Sigmoid colon (tissue), 7 donors: ENCODE measurements at regions of chr1 and their contacts with region 1.

Region 1: DNA sequence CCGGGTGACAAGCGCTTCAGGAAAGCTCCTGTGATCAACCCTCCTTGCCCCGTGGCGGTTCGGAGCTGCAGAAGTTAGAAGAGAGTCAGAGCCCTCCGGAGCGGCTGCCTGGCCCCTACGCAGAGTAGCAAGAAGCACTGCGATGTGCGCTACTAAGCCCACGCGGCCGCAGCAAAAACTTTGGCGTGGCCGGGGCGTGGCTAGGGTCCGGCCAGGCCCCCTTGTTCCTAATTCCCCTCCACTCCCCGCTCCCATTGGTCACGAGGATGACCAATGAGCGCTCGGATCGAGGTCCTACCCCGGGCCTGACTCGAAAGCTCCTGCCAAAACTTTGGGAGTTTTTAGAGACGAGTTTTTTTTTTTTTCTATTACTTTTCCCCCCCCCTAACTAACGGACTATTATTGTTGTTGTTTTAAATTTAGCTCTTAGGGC is at the start of gene HLX:
- DNase-seq: peak; percentile 99
- H3K4me3 ChIP-seq: peak within 1 kb of the TSS; percentile 84 to 97 (median 95)
- H3K27ac ChIP-seq: peak within 1 kb of the TSS; percentile 95 to 100 (median 98)
- H3K4me1 ChIP-seq: peaks cover 0 to 70% (median 57%) of the 10 kb centered on the region in 4 donors
- H3K27me3 ChIP-seq: no peaks in the 10 kb centered on the region
- CTCF ChIP-seq: no peak
- EP300 ChIP-seq: no peak
- POLR2A ChIP-seq: peak; percentile 89 to 98
- total RNA-seq, gene HLX: 28.2 to 53.5 (median 37.8) TPM

Region 2: DNA sequence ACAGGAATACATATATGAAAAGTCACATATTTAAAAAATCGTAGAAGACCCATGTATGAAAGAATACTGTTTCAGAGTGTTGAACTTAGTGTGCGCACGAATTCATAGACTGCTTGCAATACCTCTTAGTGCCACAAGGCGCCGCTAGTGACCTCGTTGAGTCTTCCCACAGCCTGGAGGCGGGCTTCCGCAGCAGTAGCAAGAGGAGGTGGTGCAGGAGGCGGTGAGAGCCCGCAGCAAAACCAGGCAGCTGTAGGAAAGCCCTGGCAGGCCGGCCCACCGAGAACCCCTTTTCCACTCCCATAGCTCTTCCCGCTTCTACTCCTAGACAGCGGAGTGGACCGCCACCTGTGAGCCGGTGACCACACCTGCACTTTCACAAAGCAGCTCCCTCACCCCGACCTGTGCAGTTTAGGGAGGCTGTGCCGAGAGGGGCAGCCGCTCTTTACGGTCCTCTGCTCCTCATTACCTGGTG is 68.9 kb before region 1 on chr1:
- intact Hi-C with region 1: loop called (anchors 1 kb)
- DNase-seq: peak; percentile 95
- H3K4me3 ChIP-seq: peak overlapping the region in 3 of 4 donors; percentile 10 to 25 (median 16)
- H3K27ac ChIP-seq: peak overlapping the region in 3 of 4 donors; percentile 46 to 77 (median 58)
- H3K4me1 ChIP-seq: peaks cover 0 to 64% (median 60%) of the 10 kb centered on the region in 4 donors
- H3K27me3 ChIP-seq: no peaks in the 10 kb centered on the region
- CTCF ChIP-seq: peak; percentile 77 to 97 (median 95)
- EP300 ChIP-seq: no peak
- POLR2A ChIP-seq: no peak

Region 3: DNA sequence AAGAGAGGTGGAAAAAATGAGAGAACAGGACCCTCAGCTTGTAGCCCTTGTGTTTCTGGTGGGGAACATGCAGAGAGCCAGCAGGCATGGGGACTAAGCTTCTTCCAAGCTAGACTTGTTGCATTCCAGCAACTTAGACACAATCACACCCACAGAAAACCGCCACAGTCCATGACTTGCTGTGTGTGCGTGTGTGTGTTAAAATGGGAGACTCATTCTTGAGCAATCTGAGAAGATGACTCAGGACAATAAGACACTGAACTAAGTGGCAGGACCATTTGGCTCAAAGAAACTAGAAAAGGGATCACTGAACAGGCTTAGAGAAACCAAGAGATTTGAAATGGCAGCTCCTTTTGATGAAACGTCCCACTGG is 78.1 kb after region 1 on chr1:
- intact Hi-C with region 1: no loop called
- DNase-seq: no peak
- H3K4me3 ChIP-seq: no peak overlapping the region
- H3K27ac ChIP-seq: peak overlapping the region in 1 of 4 donors; percentile 23
- H3K4me1 ChIP-seq: peaks cover 0 to 6% (median 0%) of the 10 kb centered on the region in 4 donors
- H3K27me3 ChIP-seq: no peaks in the 10 kb centered on the region
- CTCF ChIP-seq: no peak
- EP300 ChIP-seq: no peak
- POLR2A ChIP-seq: no peak

Region 4: DNA sequence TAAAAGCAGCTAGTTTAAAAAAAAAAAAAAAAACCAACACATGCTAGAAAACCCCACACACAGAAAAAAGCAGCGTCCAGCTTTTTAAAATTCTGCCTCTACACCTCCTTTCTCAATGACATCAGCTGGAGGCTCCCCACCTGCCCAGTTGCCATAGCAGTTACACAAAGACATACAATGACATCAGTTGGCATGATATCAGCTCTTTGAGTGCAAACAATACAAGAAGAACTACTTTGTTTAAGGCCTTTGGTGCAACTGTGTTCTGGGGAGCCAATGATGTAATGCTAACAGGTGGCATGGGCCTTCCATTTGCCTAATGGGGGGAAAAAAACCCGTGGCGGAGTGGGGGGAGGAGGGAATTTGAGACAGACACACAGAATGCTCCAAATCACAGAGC is 829.9 kb after region 1 on chr1:
- intact Hi-C with region 1: loop called (anchors 5 kb)
- DNase-seq: peak; percentile 85
- H3K4me3 ChIP-seq: no peak overlapping the region
- H3K27ac ChIP-seq: peak overlapping the region; percentile 74 to 89 (median 81)
- H3K4me1 ChIP-seq: peaks cover 0 to 98% (median 85%) of the 10 kb centered on the region in 4 donors
- H3K27me3 ChIP-seq: no peaks in the 10 kb centered on the region
- CTCF ChIP-seq: no peak
- EP300 ChIP-seq: peak in 3 of 4 donors; percentile 53 to 93 (median 89)
- POLR2A ChIP-seq: no peak

Region 5: GRCh38 chr1:221715321-221716169 is 836.5 kb after region 1 on chr1:
- intact Hi-C with region 1: loop called (anchors 5 kb)
- DNase-seq: no peak
- H3K4me3 ChIP-seq: no peak overlapping the region
- H3K27ac ChIP-seq: peak overlapping the region; percentile 73 to 89 (median 84)
- H3K4me1 ChIP-seq: peaks cover 0 to 98% (median 91%) of the 10 kb centered on the region in 4 donors
- H3K27me3 ChIP-seq: no peaks in the 10 kb centered on the region
- CTCF ChIP-seq: no peak
- EP300 ChIP-seq: peak in 2 of 4 donors; percentile 34 to 51
- POLR2A ChIP-seq: no peak

Region 6: DNA sequence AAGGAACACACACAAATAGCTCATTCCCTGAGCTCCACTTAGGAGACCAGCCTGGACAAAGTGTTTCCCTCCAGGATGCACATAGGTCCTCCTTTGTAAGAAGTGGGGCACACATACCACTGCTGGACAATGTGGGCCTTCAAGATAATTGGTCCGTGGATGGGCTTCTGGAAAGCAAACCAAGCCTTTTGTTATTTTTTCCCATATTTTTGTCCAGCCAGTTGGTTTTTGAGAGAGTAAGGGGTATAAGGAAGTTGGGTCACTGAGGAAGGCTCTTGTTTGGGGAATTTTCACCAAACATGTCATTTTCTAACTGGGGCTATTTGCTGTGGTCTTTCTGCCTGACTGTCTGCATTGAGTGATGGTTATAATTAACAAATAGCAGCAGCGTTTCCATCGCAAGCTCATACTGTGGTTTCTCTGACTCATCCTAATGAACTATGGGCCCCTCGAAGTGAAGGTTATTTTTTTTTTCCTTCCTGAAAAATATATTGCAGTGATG is 1169.1 kb after region 1 on chr1:
- intact Hi-C with region 1: loop called (anchors 10 kb)
- DNase-seq: no peak
- H3K4me3 ChIP-seq: no peak overlapping the region
- H3K27ac ChIP-seq: no peak overlapping the region
- H3K4me1 ChIP-seq: peaks cover 0 to 40% (median 27%) of the 10 kb centered on the region in 4 donors
- H3K27me3 ChIP-seq: no peaks in the 10 kb centered on the region
- CTCF ChIP-seq: no peak
- EP300 ChIP-seq: no peak
- POLR2A ChIP-seq: no peak

Region 7: DNA sequence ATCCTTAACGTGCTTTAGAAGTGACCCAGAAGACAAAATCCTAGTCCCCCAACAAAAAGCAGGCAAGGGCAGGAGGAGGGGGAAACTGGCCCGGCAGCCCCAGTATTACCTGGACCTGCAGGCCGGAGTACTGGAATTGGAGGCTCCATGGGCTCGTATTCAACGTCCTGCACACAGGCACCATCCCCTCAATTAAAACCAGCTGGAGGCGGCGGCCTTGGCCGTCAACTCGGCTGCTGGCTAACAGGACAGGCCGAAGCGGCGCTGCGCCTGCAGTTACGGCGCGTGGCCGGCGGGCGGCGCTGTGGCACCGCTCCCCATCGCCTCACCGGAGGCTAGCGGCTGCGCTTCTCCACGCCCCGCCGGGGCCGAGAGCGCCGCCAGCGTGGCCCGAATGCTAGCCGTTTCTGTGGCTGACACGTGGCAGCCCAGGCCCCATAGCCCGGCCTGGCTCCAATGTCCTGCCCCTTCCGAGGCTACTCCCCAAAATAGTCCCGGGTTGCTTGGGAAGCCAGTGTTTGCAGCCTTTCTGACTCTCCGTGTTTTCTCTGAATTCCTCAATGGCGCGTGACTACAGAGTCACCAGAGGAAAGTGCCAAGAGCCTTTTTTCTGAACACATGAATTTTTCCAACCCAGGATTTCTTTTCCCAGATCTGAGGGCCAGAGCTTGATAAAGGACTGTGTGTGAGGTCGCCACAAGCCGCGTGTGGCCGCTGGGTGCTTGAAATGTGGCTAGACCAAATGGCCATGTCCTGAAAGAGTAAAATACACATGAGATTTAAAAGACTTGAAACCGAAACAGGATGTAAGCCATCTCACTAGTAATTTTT is 1586.3 kb after region 1 on chr1:
- intact Hi-C with region 1: loop called (anchors 5 kb)
- DNase-seq: peak; percentile 96
- H3K4me3 ChIP-seq: peak overlapping the region in 3 of 4 donors; percentile 39 to 48 (median 43)
- H3K27ac ChIP-seq: peak overlapping the region; percentile 69 to 86 (median 77)
- H3K4me1 ChIP-seq: peaks cover 0 to 14% (median 4%) of the 10 kb centered on the region in 4 donors
- H3K27me3 ChIP-seq: no peaks in the 10 kb centered on the region
- CTCF ChIP-seq: peak; percentile 80 to 100 (median 99)
- EP300 ChIP-seq: no peak
- POLR2A ChIP-seq: no peak